PC-3 (cell line): ENCODE measurements at regions of chr4 and their contacts with region 1.

Region 1: DNA sequence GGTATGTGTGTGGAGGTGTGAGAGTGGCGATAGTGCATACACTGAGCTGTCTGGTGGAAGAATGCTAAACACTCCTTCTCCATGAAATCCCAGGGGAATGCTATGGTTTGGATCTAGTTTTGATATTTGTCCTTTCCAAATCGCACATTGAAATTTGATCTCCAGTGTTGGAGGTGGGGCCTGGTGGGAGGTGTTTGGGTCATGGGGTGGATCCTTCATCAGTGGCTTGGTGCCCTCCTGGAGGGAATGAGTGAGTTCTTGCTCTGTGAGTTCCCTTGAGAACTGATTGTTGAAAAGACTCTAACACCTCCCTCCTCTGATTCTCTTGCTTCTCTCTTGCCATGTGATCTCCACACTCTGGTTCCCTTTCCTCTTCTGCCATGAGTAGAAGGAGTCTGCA is 114.1 kb upstream of the HHIP start:
- DNase-seq: no peak
- ATAC-seq: no peak
- H3K4me3 ChIP-seq: no peak overlapping the region
- H3K27ac ChIP-seq: no peak overlapping the region
- H3K4me1 ChIP-seq: no peaks in the 10 kb centered on the region
- H3K27me3 ChIP-seq: no peaks in the 10 kb centered on the region
- CTCF ChIP-seq: no peak

Region 2: DNA sequence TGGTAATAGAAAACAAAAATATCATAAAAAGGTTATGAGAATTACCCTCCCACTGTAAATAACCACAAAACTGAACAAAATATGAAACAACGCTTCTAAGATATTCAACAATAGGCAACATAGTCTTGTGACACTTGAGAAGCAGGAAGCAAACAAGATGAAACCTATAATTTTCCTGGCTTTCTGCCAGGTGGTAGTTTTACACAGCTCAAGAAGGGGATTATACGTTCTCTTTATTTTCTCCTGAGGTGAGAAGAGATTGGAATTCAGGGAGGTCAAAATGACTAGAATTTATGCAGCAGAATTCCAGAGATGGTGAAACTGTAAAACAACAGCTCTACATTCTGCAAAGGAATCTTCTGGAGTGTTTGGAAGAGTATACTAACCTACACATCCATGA is 300.1 kb after region 1 on chr4:
- CTCF ChIA-PET with region 1: no interaction called
- POLR2A ChIA-PET with region 1: no interaction called
- intact Hi-C with region 1: loop called (anchors 5 kb)
- DNase-seq: peak; percentile 19
- ATAC-seq: no peak
- H3K4me3 ChIP-seq: no peak overlapping the region
- H3K27ac ChIP-seq: no peak overlapping the region
- H3K4me1 ChIP-seq: no peaks in the 10 kb centered on the region
- H3K27me3 ChIP-seq: no peaks in the 10 kb centered on the region
- CTCF ChIP-seq: no peak